Aorta (tissue), 5 donors: ENCODE measurements at regions of chr12 and their contacts with region 1.

Region 1: GRCh38 chr12:95700316-95700785 is 90.2 kb downstream of the NTN4 start:
- DNase-seq: peak in 1 of 2 donors; percentile 74
- ATAC-seq: peak; percentile 21
- H3K4me3 ChIP-seq: no peak overlapping the region
- H3K27ac ChIP-seq: peak overlapping the region; percentile 20 to 59
- H3K4me1 ChIP-seq: peaks cover 0 to 2% of the 10 kb centered on the region in 2 donors
- H3K27me3 ChIP-seq: no peaks in the 10 kb centered on the region

Region 2: GRCh38 chr12:95623585-95624042 is 76.7 kb before region 1 on chr12:
- intact Hi-C with region 1: no loop called
- DNase-seq: peak; percentile 82 to 88
- ATAC-seq: peak; percentile 80
- H3K4me3 ChIP-seq: no peak overlapping the region
- H3K27ac ChIP-seq: no peak overlapping the region
- H3K4me1 ChIP-seq: no peaks in the 10 kb centered on the region
- H3K27me3 ChIP-seq: no peaks in the 10 kb centered on the region

Region 3: DNA sequence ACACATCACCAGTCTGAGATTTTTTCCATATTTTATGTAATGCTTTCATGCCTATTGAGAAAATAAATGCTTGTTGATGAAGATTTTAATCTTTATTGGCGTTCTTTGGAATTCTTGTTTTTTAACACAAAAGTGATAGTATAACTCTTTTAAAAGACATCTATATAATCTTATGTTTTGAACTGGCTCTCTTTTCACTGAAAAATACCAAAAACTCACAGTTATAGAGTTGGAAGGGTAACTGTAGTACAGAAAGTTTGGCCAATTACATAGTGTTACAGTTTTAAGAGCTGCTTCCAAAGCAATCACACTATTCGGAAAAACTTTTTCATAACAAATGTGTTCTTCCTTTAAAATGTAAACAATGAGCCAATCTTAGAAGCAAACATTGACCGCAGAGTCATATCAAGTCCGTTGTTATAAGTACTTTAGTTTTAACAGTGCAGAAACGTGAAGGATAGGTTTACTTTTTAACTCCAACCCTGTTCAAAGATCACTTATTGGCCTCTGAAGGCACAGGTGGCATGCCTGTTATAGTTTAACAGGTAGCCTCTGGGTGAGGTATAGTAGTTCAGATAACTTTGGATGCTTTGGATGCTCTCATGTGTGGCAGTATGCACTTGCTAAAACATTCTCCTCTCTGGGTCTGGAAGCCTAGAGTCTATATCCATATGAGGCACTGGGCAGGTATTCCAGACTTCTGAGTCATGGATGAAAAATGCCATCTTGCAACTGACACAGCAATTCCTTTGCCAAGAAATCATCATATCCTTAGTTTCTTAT is 102.3 kb after region 1 on chr12:
- intact Hi-C with region 1: loop called in 1 of 2 experiments (anchors 5 kb)
- DNase-seq: no peak
- ATAC-seq: no peak
- H3K4me3 ChIP-seq: no peak overlapping the region
- H3K27ac ChIP-seq: no peak overlapping the region
- H3K4me1 ChIP-seq: peaks cover 0 to 3% of the 10 kb centered on the region in 2 donors
- H3K27me3 ChIP-seq: no peaks in the 10 kb centered on the region